Activated CD8-positive, alpha-beta T cell treated with anti-CD3 and anti-CD28 coated beads for 36 hours (primary cell): ENCODE measurements at regions of chr2 and their contacts with region 1.

Region 1: DNA sequence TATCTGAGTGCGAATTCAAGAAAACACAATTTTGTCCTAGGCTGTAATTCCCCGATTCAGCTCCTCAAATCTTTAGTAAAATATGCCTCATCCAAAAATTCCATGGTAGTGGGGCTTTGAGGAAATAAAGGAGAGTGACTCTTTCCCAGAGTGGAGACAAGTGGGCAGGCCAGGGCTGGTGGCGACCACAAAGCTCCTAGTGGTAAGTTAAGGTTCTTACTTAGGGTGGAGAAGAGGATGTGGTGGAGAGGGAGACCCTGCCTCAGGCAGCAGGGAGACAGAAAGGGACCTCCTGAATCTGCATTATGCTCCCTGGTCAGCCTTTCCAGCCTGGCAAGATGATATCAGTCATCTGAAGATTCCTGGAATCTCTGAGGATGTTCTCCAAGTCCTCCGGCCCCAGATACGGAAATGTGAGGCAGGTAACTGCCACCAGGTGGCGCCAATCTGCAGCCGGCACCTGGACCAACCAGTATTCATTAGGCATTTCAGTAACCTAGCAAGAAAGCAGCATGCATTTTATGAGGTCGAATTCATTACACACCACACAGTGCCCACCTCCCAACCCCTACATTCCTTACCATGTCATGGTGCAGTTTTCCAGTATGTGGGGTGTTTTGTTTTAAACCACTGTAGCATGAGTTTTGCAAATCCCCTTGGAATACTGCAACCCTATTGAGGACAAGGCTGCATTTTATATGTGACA is 106.4 kb downstream of the POLE4 start:
- DNase-seq: peak; percentile 66
- ATAC-seq: peak; percentile 64
- H3K4me3 Mint-ChIP-seq: no peak overlapping the region
- H3K27ac Mint-ChIP-seq: no peak overlapping the region
- H3K4me1 Mint-ChIP-seq: no peaks in the 10 kb centered on the region
- H3K27me3 Mint-ChIP-seq: no peaks in the 10 kb centered on the region
- CTCF ChIP-seq: peak; percentile 80

Region 2: DNA sequence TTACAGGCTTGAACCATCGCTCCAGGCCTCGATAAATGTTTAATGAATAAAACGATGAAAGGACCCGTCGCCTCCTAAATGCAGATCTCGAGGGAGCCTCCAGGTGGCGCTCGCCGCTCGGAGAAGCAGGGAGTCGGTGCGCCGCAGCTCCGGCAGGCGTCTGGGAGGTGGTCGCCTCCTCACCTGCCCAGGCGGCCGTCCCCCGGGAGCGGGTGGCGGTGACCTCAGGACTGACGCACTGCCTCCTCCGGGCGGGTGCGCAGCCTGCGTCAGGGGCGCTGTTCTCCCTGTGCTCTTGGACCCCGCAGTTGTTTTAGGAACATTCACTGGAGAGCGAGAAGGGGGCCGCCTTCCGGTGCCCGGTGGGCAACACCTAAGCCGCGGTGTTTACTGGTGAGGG is 145.0 kb before region 1 on chr2:
- CTCF ChIA-PET with region 1: interaction called, 20 read pairs
- POLR2A ChIA-PET with region 1: no interaction called
- intact Hi-C with region 1: no loop called
- DNase-seq: peak; percentile 78
- ATAC-seq: peak; percentile 75
- H3K4me3 Mint-ChIP-seq: peak overlapping the region; percentile 37
- H3K27ac Mint-ChIP-seq: no peak overlapping the region
- H3K4me1 Mint-ChIP-seq: peaks cover 10% of the 10 kb centered on the region
- H3K27me3 Mint-ChIP-seq: peaks cover 20% of the 10 kb centered on the region
- CTCF ChIP-seq: peak; percentile 98

Region 3: GRCh38 chr2:74953796-74954499 is 110.9 kb before region 1 on chr2:
- CTCF ChIA-PET with region 1: no interaction called
- POLR2A ChIA-PET with region 1: no interaction called
- intact Hi-C with region 1: no loop called
- DNase-seq: no peak
- ATAC-seq: no peak
- H3K4me3 Mint-ChIP-seq: no peak overlapping the region
- H3K27ac Mint-ChIP-seq: no peak overlapping the region
- H3K4me1 Mint-ChIP-seq: peaks cover 30% of the 10 kb centered on the region
- H3K27me3 Mint-ChIP-seq: no peaks in the 10 kb centered on the region
- CTCF ChIP-seq: no peak

Region 4: DNA sequence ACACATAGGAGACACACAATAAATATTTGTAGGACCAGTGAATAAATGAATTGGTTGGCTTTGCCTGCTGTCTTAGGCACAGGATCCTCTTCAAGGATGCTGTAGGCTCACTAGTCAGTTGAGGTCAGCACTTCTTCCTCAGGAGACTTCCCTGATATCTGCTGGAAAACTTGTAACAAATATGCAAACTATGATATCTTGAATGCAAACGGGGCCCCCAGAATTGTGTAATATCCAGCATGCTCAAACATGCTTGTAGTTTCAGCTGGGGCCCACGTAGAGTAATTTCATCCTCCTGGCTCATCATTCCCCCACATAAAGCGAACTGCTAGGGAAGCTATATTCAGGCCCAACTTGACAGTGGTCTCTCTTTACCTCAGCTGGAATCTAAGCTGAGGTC is 62.8 kb before region 1 on chr2:
- CTCF ChIA-PET with region 1: no interaction called
- POLR2A ChIA-PET with region 1: no interaction called
- intact Hi-C with region 1: no loop called
- DNase-seq: no peak
- ATAC-seq: no peak
- H3K4me3 Mint-ChIP-seq: no peak overlapping the region
- H3K27ac Mint-ChIP-seq: no peak overlapping the region
- H3K4me1 Mint-ChIP-seq: no peaks in the 10 kb centered on the region
- H3K27me3 Mint-ChIP-seq: no peaks in the 10 kb centered on the region
- CTCF ChIP-seq: no peak

Region 5: DNA sequence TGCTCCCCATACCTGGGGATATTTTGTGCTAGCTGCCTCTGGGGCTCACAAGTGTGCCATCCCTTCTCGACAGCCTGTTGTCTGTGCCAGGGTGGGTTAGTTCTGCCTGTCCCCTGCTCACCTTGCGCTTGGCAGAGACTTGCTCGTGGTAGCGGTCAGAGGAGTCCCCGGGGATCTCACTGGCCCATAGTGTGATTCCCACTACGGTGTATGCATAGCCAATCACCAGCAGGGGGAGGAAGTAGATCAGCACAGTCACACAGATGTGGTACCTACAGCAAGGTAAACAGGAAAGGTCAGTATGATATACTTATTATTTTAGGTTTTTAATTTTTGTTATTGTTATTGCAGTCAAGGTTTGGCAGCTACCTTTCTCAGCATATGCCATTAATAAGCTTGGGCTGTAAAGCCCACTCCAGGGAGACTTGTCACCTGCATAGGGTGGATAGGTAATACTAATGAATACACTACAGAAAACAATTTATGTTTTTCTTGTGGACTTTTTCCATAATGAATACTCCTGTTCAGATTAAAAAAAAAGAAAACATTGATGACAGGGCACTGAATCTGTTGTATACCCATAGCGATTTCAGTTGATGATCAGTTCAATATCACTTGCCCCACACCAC is 11.2 kb before region 1 on chr2:
- CTCF ChIA-PET with region 1: interaction called, 23 read pairs
- POLR2A ChIA-PET with region 1: no interaction called
- intact Hi-C with region 1: no loop called
- DNase-seq: peak; percentile 10
- ATAC-seq: peak; percentile 60
- H3K4me3 Mint-ChIP-seq: no peak overlapping the region
- H3K27ac Mint-ChIP-seq: no peak overlapping the region
- H3K4me1 Mint-ChIP-seq: no peaks in the 10 kb centered on the region
- H3K27me3 Mint-ChIP-seq: no peaks in the 10 kb centered on the region
- CTCF ChIP-seq: peak; percentile 54

Region 6: GRCh38 chr2:75076088-75076487 is 11.2 kb after region 1 on chr2:
- CTCF ChIA-PET with region 1: interaction called, 29 read pairs
- POLR2A ChIA-PET with region 1: no interaction called
- intact Hi-C with region 1: no loop called
- DNase-seq: no peak
- ATAC-seq: no peak
- H3K4me3 Mint-ChIP-seq: no peak overlapping the region
- H3K27ac Mint-ChIP-seq: no peak overlapping the region
- H3K4me1 Mint-ChIP-seq: no peaks in the 10 kb centered on the region
- H3K27me3 Mint-ChIP-seq: no peaks in the 10 kb centered on the region
- CTCF ChIP-seq: no peak

Region 7: GRCh38 chr2:75256485-75256884 is 191.6 kb after region 1 on chr2:
- CTCF ChIA-PET with region 1: no interaction called
- POLR2A ChIA-PET with region 1: no interaction called
- intact Hi-C with region 1: no loop called
- DNase-seq: no peak
- ATAC-seq: no peak
- H3K4me3 Mint-ChIP-seq: no peak overlapping the region
- H3K27ac Mint-ChIP-seq: no peak overlapping the region
- H3K4me1 Mint-ChIP-seq: no peaks in the 10 kb centered on the region
- H3K27me3 Mint-ChIP-seq: no peaks in the 10 kb centered on the region
- CTCF ChIP-seq: no peak

Region 8: GRCh38 chr2:75403991-75404428 is 339.2 kb after region 1 on chr2:
- CTCF ChIA-PET with region 1: interaction called, 5 read pairs
- POLR2A ChIA-PET with region 1: no interaction called
- intact Hi-C with region 1: loop called (anchors 5 kb)
- DNase-seq: no peak
- ATAC-seq: peak; percentile 87
- H3K4me3 Mint-ChIP-seq: no peak overlapping the region
- H3K27ac Mint-ChIP-seq: no peak overlapping the region
- H3K4me1 Mint-ChIP-seq: peaks cover 23% of the 10 kb centered on the region
- H3K27me3 Mint-ChIP-seq: no peaks in the 10 kb centered on the region
- CTCF ChIP-seq: peak; percentile 86